ENCODE measurements at regions of chr9 and their contacts with region 1.

Region 1: DNA sequence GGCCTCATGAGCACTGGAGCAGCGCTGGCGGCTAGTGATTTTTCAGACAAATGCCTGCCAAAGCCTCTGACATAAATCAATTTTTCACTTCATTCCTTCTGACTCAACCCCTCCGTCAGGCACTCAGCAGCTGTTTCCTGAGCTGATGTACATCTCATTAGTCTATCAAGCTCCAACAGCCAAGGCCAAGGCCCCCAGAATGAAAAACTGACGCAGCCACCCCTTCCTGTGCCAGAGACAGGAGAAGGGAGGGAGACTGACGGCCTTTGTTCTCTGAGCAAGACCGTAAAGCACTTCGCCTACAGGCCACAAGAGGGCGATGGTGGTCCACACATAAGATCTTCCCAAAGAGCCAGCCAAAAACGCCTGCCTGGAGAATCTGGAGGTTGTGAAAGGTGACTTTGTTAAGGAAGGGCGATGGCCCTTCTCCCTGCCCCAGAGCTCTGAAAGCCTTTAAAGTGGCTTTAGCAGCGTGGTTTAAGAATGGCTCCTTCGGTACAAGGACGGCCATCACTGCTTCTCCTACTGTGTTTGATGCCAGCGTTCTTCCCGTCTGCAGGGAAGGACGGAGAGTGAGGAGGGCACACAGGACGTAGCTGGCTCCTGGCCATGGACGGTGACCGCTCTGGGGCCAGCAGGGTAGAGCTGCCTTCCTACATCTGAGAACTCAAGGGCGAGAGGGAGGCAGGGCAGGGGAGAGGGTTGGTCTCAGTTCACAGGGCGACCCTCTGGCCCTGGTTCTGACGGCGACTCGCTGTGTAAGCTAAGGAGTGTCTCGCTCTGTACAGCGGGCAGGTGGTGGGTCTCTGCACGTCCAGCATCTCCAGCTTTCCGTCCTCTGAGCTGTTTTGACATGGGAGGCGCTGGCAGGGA is 37.0 kb downstream of the ALG2 start:
- DNase-seq: peak; percentile 89
- ATAC-seq: peak; percentile 86
- H3K4me3 ChIP-seq: peak overlapping the region in 3 of 5 experiments; percentile 6 to 36 (median 29)
- H3K4me3 Mint-ChIP-seq: peak overlapping the region; percentile 62
- H3K27ac ChIP-seq: peak overlapping the region in 1 of 2 donors; percentile 3
- H3K27ac Mint-ChIP-seq: peak overlapping the region; percentile 84
- H3K4me1 ChIP-seq: peaks cover 49 to 65% of the 10 kb centered on the region in 2 donors
- H3K4me1 Mint-ChIP-seq: peaks cover 92% of the 10 kb centered on the region
- H3K27me3 ChIP-seq: no peaks in the 10 kb centered on the region
- H3K27me3 Mint-ChIP-seq: no peaks in the 10 kb centered on the region
- CTCF ChIP-seq: peak; percentile 99

Region 2: GRCh38 chr9:99162759-99163364 is 21.8 kb before region 1 on chr9:
- CTCF ChIA-PET with region 1: interaction called, 185 read pairs
- POLR2A ChIA-PET with region 1: interaction called, 4 read pairs
- intact Hi-C with region 1: loop called (anchors 1 kb)
- DNase-seq: peak; percentile 69
- ATAC-seq: peak; percentile 59
- H3K4me3 ChIP-seq: no peak overlapping the region
- H3K4me3 Mint-ChIP-seq: peak overlapping the region; percentile 27
- H3K27ac ChIP-seq: no peak overlapping the region
- H3K27ac Mint-ChIP-seq: no peak overlapping the region
- H3K4me1 ChIP-seq: peaks cover 8 to 9% of the 10 kb centered on the region in 2 donors
- H3K4me1 Mint-ChIP-seq: peaks cover 37% of the 10 kb centered on the region
- H3K27me3 ChIP-seq: no peaks in the 10 kb centered on the region
- H3K27me3 Mint-ChIP-seq: no peaks in the 10 kb centered on the region
- CTCF ChIP-seq: peak; percentile 82

Region 3: DNA sequence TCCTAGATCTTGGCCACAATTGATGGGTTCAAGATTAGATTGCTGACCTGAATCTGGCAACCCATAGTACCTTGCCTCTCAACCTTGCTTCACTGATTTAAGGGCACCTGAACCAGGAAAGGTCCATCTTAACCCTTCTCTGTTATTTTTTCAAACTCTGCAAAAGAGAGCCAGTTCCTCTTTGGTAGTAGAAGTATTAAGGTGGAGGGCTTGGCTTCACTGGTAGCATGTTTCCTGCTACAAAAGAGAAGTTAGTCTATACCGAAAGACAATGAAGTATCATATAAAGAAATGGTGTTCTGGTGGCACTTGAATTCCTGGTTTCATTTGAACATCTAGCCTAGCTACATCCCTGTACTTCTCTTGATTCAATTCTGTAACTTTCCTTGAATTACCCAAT is 28.5 kb after region 1 on chr9:
- CTCF ChIA-PET with region 1: interaction called, 13 read pairs
- POLR2A ChIA-PET with region 1: no interaction called
- intact Hi-C with region 1: no loop called
- DNase-seq: peak; percentile 23
- ATAC-seq: peak; percentile 21
- H3K4me3 ChIP-seq: no peak overlapping the region
- H3K4me3 Mint-ChIP-seq: no peak overlapping the region
- H3K27ac ChIP-seq: peak overlapping the region in 1 of 2 donors; percentile 3
- H3K27ac Mint-ChIP-seq: no peak overlapping the region
- H3K4me1 ChIP-seq: peaks cover 9 to 10% of the 10 kb centered on the region in 2 donors
- H3K4me1 Mint-ChIP-seq: peaks cover 30% of the 10 kb centered on the region
- H3K27me3 ChIP-seq: peaks cover 0 to 3% (median 0%) of the 10 kb centered on the region in 4 experiments
- H3K27me3 Mint-ChIP-seq: no peaks in the 10 kb centered on the region
- CTCF ChIP-seq: no peak

Region 4: GRCh38 chr9:99266255-99267023 is 81.7 kb after region 1 on chr9:
- CTCF ChIA-PET with region 1: interaction called, 19 read pairs
- POLR2A ChIA-PET with region 1: no interaction called
- intact Hi-C with region 1: loop called (anchors 1 kb)
- DNase-seq: peak; percentile 81
- ATAC-seq: peak; percentile 74
- H3K4me3 ChIP-seq: peak overlapping the region in 1 of 5 experiments; percentile 3
- H3K4me3 Mint-ChIP-seq: peak overlapping the region; percentile 71
- H3K27ac ChIP-seq: no peak overlapping the region
- H3K27ac Mint-ChIP-seq: peak overlapping the region; percentile 59
- H3K4me1 ChIP-seq: peaks cover 6 to 9% of the 10 kb centered on the region in 2 donors
- H3K4me1 Mint-ChIP-seq: peaks cover 31% of the 10 kb centered on the region
- H3K27me3 ChIP-seq: no peaks in the 10 kb centered on the region
- H3K27me3 Mint-ChIP-seq: peaks cover 3% of the 10 kb centered on the region
- CTCF ChIP-seq: peak; percentile 95

Region 5: GRCh38 chr9:99720455-99721050 is 535.8 kb after region 1 on chr9:
- CTCF ChIA-PET with region 1: no interaction called
- POLR2A ChIA-PET with region 1: no interaction called
- intact Hi-C with region 1: loop called (anchors 5 kb)
- DNase-seq: peak; percentile 60
- ATAC-seq: no peak
- H3K4me3 ChIP-seq: peak overlapping the region; percentile 16 to 60 (median 47)
- H3K4me3 Mint-ChIP-seq: peak overlapping the region; percentile 88
- H3K27ac ChIP-seq: peak overlapping the region; percentile 50 to 69
- H3K27ac Mint-ChIP-seq: peak overlapping the region; percentile 81
- H3K4me1 ChIP-seq: peaks cover 12 to 16% of the 10 kb centered on the region in 2 donors
- H3K4me1 Mint-ChIP-seq: peaks cover 30% of the 10 kb centered on the region
- H3K27me3 ChIP-seq: no peaks in the 10 kb centered on the region
- H3K27me3 Mint-ChIP-seq: no peaks in the 10 kb centered on the region
- CTCF ChIP-seq: no peak

Region 6: GRCh38 chr9:100011062-100011681 is 826.5 kb after region 1 on chr9:
- CTCF ChIA-PET with region 1: interaction called, 7 read pairs
- POLR2A ChIA-PET with region 1: no interaction called
- intact Hi-C with region 1: loop called (anchors 1 kb)
- DNase-seq: peak; percentile 66
- ATAC-seq: no peak
- H3K4me3 ChIP-seq: no peak overlapping the region
- H3K4me3 Mint-ChIP-seq: no peak overlapping the region
- H3K27ac ChIP-seq: no peak overlapping the region
- H3K27ac Mint-ChIP-seq: no peak overlapping the region
- H3K4me1 ChIP-seq: no peaks in the 10 kb centered on the region
- H3K4me1 Mint-ChIP-seq: no peaks in the 10 kb centered on the region
- H3K27me3 ChIP-seq: no peaks in the 10 kb centered on the region
- H3K27me3 Mint-ChIP-seq: no peaks in the 10 kb centered on the region
- CTCF ChIP-seq: peak; percentile 82

Region 7: DNA sequence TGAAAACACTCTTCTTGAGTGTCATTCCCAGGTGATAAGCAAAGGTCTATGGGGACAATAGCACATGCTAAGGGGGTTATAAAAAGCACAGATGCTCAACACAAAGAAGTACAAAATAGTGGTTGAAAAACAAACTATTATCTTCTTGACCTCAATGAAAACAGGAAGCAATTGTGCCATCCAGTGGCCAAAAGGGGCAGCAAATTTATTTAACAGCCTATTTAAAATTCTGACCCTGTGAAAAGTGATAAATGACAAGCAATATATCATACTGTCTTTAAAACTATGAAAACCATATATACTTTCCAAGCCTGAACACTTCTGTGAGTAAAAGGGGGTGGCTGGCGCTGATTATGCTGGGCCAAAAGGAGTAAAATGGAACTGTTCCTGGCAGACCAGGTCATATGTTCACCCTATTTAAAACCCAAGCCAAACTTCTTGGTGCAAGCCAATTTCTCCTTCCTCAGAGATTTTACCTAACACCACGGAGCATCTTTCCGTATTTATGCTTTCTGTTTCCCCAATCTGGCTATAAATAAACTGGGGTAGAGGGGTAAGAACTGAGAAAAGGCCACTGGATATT is 1138.3 kb after region 1 on chr9:
- CTCF ChIA-PET with region 1: interaction called, 19 read pairs
- POLR2A ChIA-PET with region 1: no interaction called
- intact Hi-C with region 1: loop called (anchors 1 kb)
- DNase-seq: peak; percentile 61
- ATAC-seq: no peak
- H3K4me3 ChIP-seq: no peak overlapping the region
- H3K4me3 Mint-ChIP-seq: no peak overlapping the region
- H3K27ac ChIP-seq: no peak overlapping the region
- H3K27ac Mint-ChIP-seq: no peak overlapping the region
- H3K4me1 ChIP-seq: no peaks in the 10 kb centered on the region
- H3K4me1 Mint-ChIP-seq: peaks cover 4% of the 10 kb centered on the region
- H3K27me3 ChIP-seq: no peaks in the 10 kb centered on the region
- H3K27me3 Mint-ChIP-seq: no peaks in the 10 kb centered on the region
- CTCF ChIP-seq: peak; percentile 78